Activated CD8-positive, alpha-beta memory T cell treated with anti-CD3 and anti-CD28 coated beads, Interleukin-2, amount 10 ng/mL, durations not matched to agents 7 days and 5 days (primary cell): ENCODE measurements at regions of chr2 and their contacts with region 1.

Region 1: GRCh38 chr2:186503848-186504606 is 18.0 kb downstream of the ZC3H15 start:
- DNase-seq: no peak
- ATAC-seq: peak; percentile 53
- H3K4me3 Mint-ChIP-seq: peak overlapping the region; percentile 2
- H3K27ac Mint-ChIP-seq: peak overlapping the region; percentile 73
- H3K4me1 Mint-ChIP-seq: peaks cover 11% of the 10 kb centered on the region
- H3K27me3 Mint-ChIP-seq: no peaks in the 10 kb centered on the region

Region 2: GRCh38 chr2:185990861-185991525 is 513.0 kb before region 1 on chr2:
- CTCF ChIA-PET with region 1: no interaction called
- DNase-seq: no peak
- ATAC-seq: no peak
- H3K4me3 Mint-ChIP-seq: no peak overlapping the region
- H3K27ac Mint-ChIP-seq: no peak overlapping the region
- H3K4me1 Mint-ChIP-seq: no peaks in the 10 kb centered on the region
- H3K27me3 Mint-ChIP-seq: no peaks in the 10 kb centered on the region

Region 3: GRCh38 chr2:186093174-186093573 is 410.9 kb before region 1 on chr2:
- CTCF ChIA-PET with region 1: no interaction called
- DNase-seq: no peak
- ATAC-seq: no peak
- H3K4me3 Mint-ChIP-seq: no peak overlapping the region
- H3K27ac Mint-ChIP-seq: no peak overlapping the region
- H3K4me1 Mint-ChIP-seq: no peaks in the 10 kb centered on the region
- H3K27me3 Mint-ChIP-seq: no peaks in the 10 kb centered on the region

Region 4: DNA sequence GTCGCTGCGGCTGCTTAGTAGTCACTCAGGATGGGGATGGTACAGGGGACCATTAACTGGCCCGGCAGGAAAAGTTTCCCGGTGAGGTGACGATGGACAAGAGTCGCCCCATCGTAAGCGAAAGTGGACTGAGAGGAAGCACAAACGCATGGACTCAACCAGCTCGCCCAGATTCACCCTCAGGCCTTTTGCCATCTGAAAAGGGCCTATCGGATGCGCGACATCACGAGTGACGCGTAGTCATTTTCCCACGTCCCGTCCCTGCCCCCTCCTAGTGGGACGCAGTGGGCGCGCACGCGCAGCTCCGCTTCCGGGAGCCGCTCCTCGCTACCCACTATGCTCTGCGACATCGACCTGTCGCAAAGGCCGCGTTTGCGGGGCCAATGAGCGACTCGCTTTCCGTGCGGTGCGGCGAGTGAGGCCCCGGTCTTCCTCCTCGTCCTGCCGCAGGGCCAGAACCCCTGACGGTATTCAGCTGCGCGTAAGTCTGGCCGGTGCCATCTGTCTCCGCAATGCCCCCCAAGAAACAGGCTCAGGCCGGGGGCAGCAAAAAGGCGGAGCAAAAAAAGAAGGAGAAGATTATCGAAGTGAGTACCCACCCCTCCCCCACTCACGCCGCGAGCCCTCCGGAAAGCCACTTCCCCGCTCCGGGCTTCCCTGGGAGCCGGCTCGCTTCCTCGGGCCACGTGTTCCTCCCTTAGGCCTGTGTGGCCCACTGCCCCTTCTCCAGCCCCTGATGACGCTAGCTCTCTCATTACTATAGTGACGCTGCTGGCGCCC is 18.0 kb before region 1 on chr2 and contains the start of gene ZC3H15:
- CTCF ChIA-PET with region 1: interaction called, 13 read pairs
- DNase-seq: peak; percentile 98
- ATAC-seq: peak; percentile 92
- H3K4me3 Mint-ChIP-seq: peak within 1 kb of the TSS; percentile 98
- H3K27ac Mint-ChIP-seq: peak within 1 kb of the TSS; percentile 100
- H3K4me1 Mint-ChIP-seq: peaks cover 58% of the 10 kb centered on the region
- H3K27me3 Mint-ChIP-seq: no peaks in the 10 kb centered on the region
- total RNA-seq, gene ZC3H15: 67.3 to 87.2 TPM

Region 5: GRCh38 chr2:186493564-186494085 is 10.4 kb before region 1 on chr2:
- CTCF ChIA-PET with region 1: interaction called, 11 read pairs
- DNase-seq: no peak
- ATAC-seq: no peak
- H3K4me3 Mint-ChIP-seq: no peak overlapping the region
- H3K27ac Mint-ChIP-seq: no peak overlapping the region
- H3K4me1 Mint-ChIP-seq: peaks cover 47% of the 10 kb centered on the region
- H3K27me3 Mint-ChIP-seq: no peaks in the 10 kb centered on the region

Region 6: DNA sequence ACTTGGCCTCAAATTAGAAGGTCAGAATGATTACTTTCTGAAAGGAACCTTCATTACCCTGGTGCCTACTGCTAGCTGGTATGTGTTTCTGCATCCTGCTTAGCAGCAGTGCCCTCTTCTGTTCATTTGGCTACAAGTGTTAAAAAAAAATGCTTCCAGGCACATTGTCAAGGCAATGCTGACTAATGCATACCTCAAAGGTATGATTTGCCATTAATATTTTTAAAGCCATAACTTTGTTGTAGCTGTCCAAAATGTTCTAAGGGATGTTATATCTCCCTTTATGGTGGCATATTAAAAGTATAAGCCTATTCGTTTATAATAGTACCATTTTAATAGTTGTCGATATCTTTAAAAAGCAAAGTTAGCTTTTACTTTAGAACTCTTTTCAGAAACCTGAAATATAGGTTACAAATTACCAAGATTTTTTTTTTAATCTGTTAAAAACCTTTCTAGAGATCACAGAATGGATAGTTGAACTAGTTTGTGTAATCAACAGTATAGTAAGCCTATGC is 137.8 kb after region 1 on chr2:
- CTCF ChIA-PET with region 1: interaction called, 72 read pairs
- DNase-seq: peak; percentile 51
- ATAC-seq: peak; percentile 86
- H3K4me3 Mint-ChIP-seq: no peak overlapping the region
- H3K27ac Mint-ChIP-seq: no peak overlapping the region
- H3K4me1 Mint-ChIP-seq: peaks cover 25% of the 10 kb centered on the region
- H3K27me3 Mint-ChIP-seq: no peaks in the 10 kb centered on the region

Region 7: DNA sequence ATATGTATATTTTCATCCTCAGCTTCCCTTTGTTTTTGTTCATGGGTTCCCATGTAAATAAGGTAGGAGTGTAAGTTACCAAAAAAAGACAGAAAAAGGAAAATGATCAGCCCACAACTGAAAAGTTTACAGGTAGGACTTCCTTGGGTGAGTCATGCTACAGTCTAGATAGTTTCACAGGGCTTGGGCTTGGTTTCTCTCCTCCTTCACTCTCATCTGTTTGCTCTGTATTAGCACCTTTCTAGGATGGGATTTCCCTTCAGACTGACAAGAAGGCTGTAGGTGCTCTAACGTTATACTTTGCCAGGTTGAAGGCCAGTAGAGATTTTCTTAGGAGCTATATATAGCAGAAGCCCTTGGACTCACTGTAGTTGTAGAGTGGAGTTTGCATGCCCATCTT is 247.8 kb after region 1 on chr2:
- CTCF ChIA-PET with region 1: no interaction called
- DNase-seq: no peak
- ATAC-seq: no peak
- H3K4me3 Mint-ChIP-seq: no peak overlapping the region
- H3K27ac Mint-ChIP-seq: no peak overlapping the region
- H3K4me1 Mint-ChIP-seq: no peaks in the 10 kb centered on the region
- H3K27me3 Mint-ChIP-seq: no peaks in the 10 kb centered on the region